B cell (primary cell): ENCODE measurements at regions of chr5 and their contacts with region 1.

Region 1: DNA sequence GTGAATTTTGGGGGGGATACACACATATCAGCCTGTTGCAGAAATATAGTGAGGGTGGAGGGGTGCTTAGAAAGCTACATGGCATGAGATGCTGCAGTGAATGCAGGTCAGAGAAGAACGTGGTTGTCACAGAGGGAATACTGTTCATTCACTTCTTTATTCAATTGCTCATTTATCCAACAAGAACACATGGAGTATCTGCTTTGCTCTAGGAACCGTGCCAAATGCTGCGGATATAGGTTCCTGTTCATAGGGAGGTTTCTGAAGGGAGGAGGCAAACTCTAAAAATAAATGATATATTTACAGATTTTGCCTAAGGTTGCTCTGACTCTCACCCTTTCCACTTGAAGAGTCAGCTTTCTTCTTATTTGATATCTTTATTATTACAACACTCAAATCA is 444.3 kb upstream of the CLINT1 start:
- DNase-seq: no peak
- ATAC-seq: no peak
- H3K4me3 ChIP-seq: no peak overlapping the region
- H3K4me3 Mint-ChIP-seq: no peak overlapping the region
- H3K27ac ChIP-seq: no peak overlapping the region
- H3K27ac Mint-ChIP-seq: no peak overlapping the region
- H3K4me1 ChIP-seq: no peaks in the 10 kb centered on the region
- H3K4me1 Mint-ChIP-seq: no peaks in the 10 kb centered on the region
- H3K27me3 ChIP-seq: no peaks in the 10 kb centered on the region
- H3K27me3 Mint-ChIP-seq: peaks cover 3% of the 10 kb centered on the region
- CTCF ChIP-seq: no peak

Region 2: DNA sequence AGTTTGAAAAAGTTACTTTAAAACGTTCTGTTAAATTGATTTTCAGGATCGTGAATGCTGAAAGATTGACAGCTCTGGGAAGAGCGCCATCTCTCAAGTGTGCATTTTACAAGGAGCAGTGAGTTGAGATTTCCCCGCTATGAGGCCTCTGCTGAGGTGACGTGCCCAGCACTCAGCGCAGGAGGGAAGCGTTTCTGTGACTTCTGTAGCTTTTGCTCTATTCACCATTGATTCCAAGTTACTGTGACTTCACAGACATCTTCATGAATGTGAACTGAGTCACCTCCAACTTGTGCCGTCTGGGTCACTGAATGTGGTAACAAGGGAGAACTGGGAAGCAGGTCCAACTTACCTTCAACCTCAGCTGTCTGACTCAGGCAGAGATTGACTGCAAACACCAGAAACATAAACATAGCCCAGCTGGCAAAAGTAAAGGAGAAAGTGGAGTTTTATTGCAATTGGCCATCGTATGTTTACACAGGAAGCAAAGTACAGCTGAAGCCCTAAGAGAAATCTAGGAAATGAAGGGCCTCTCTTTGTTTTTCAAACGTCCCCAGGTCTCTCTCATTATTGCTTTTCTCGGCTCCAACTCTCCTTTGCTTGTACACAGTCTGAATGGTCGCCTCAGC is 15.5 kb before region 1 on chr5:
- CTCF ChIA-PET with region 1: no interaction called
- POLR2A ChIA-PET with region 1: no interaction called
- intact Hi-C with region 1: no loop called
- DNase-seq: no peak
- ATAC-seq: no peak
- H3K4me3 ChIP-seq: no peak overlapping the region
- H3K4me3 Mint-ChIP-seq: no peak overlapping the region
- H3K27ac ChIP-seq: no peak overlapping the region
- H3K27ac Mint-ChIP-seq: no peak overlapping the region
- H3K4me1 ChIP-seq: peaks cover 0 to 6% of the 10 kb centered on the region in 2 donors
- H3K4me1 Mint-ChIP-seq: no peaks in the 10 kb centered on the region
- H3K27me3 ChIP-seq: no peaks in the 10 kb centered on the region
- H3K27me3 Mint-ChIP-seq: no peaks in the 10 kb centered on the region
- CTCF ChIP-seq: no peak

Region 3: DNA sequence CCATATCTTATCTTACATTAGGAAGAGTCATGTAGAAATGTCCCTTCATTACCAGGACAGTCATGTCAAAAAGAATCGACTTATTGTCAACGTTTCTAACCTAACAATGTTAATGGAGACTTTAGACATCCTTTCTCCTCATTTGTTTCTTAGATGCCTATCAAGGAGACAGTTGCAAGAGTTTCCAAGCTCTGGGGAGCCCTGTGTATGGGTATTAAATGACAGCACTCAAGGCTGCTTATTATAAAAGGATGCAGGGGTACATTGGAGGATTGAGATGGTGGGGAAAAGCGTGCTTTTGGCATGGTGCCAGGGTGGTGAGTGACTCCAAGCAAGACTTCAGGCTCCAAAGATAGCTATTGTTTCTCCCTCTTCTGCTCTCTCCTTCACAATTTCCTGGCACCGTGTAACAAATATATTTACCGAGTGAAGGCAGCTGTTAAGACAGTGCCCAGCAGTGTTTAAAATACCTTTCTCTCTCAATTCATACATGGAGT is 17.0 kb after region 1 on chr5:
- CTCF ChIA-PET with region 1: no interaction called
- POLR2A ChIA-PET with region 1: no interaction called
- intact Hi-C with region 1: no loop called
- DNase-seq: no peak
- ATAC-seq: no peak
- H3K4me3 ChIP-seq: no peak overlapping the region
- H3K4me3 Mint-ChIP-seq: no peak overlapping the region
- H3K27ac ChIP-seq: no peak overlapping the region
- H3K27ac Mint-ChIP-seq: no peak overlapping the region
- H3K4me1 ChIP-seq: no peaks in the 10 kb centered on the region
- H3K4me1 Mint-ChIP-seq: no peaks in the 10 kb centered on the region
- H3K27me3 ChIP-seq: no peaks in the 10 kb centered on the region
- H3K27me3 Mint-ChIP-seq: no peaks in the 10 kb centered on the region
- CTCF ChIP-seq: no peak

Region 4: GRCh38 chr5:158560170-158560569 is 256.9 kb after region 1 on chr5:
- CTCF ChIA-PET with region 1: no interaction called
- POLR2A ChIA-PET with region 1: no interaction called
- intact Hi-C with region 1: loop called (anchors 10 kb)
- DNase-seq: peak; percentile 46
- ATAC-seq: peak; percentile 81
- H3K4me3 ChIP-seq: peak overlapping the region in 2 of 5 experiments; percentile 16
- H3K4me3 Mint-ChIP-seq: peak overlapping the region; percentile 80
- H3K27ac ChIP-seq: no peak overlapping the region
- H3K27ac Mint-ChIP-seq: peak overlapping the region; percentile 79
- H3K4me1 ChIP-seq: peaks cover 33 to 44% of the 10 kb centered on the region in 2 donors
- H3K4me1 Mint-ChIP-seq: peaks cover 57% of the 10 kb centered on the region
- H3K27me3 ChIP-seq: no peaks in the 10 kb centered on the region
- H3K27me3 Mint-ChIP-seq: no peaks in the 10 kb centered on the region
- CTCF ChIP-seq: no peak